Calu3 (cell line): ENCODE measurements at regions of chr2 and their contacts with region 1.

Region 1: DNA sequence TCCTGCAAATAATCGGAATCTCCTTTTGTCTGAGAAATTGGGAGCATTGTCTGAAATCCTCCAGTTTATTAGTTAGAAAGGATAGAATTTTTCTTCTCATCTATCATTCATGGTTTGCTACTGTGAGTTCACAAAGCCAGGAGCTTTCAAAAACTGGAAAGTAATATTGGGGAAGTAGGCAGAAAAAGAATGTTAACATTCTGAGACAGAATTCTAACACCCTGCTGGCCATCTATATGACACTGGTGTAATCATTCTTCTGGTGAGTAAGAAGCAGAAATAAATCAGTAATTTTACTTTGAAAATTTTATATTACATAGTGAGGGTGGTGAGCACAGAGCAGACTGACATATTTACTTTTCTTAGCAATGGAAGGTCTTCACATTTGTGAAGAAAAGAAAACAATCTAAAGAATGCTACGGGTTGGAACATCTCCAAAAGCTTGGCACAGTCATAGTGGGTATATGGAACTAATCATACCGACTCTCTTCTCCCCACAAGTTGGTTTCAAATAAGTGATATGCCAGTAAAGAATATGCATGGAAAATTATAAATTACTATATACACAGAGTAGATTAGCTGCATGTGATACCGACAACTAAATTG is 344.9 kb downstream of the LPIN1 start:
- DNase-seq: no peak
- H3K4me3 Mint-ChIP-seq: no peak overlapping the region
- H3K27ac Mint-ChIP-seq: no peak overlapping the region
- H3K4me1 Mint-ChIP-seq: no peaks in the 10 kb centered on the region
- H3K27me3 Mint-ChIP-seq: peaks cover 11% of the 10 kb centered on the region
- CTCF ChIP-seq: no peak

Region 2: DNA sequence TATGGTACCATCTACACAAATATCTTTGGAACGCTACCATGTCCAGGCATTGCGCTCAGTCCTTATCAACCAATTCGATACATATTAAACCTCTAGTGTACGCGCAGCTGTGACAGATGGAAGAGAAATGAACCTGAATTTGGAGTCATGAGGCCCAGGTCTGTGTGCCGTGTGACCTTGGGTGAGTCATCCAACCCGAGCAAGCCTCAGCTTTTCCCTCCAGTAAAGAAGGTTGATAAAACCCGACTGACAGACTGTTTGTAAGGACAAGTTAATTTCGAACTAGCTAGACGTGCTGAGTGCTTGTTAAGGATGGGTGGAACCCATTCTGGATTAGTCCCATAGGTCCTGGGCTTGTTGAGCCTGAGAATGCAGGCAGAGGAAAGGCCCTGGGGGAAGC is 529.3 kb before region 1 on chr2:
- CTCF ChIA-PET with region 1: no interaction called
- intact Hi-C with region 1: loop called (anchors 10 kb)
- DNase-seq: peak; percentile 24
- H3K4me3 Mint-ChIP-seq: no peak overlapping the region
- H3K27ac Mint-ChIP-seq: no peak overlapping the region
- H3K4me1 Mint-ChIP-seq: peaks cover 8% of the 10 kb centered on the region
- H3K27me3 Mint-ChIP-seq: peaks cover 35% of the 10 kb centered on the region
- CTCF ChIP-seq: no peak

Region 3: GRCh38 chr2:11980809-11981208 is 110.5 kb before region 1 on chr2:
- CTCF ChIA-PET with region 1: no interaction called
- intact Hi-C with region 1: no loop called
- DNase-seq: no peak
- H3K4me3 Mint-ChIP-seq: no peak overlapping the region
- H3K27ac Mint-ChIP-seq: no peak overlapping the region
- H3K4me1 Mint-ChIP-seq: no peaks in the 10 kb centered on the region
- H3K27me3 Mint-ChIP-seq: peaks cover 16% of the 10 kb centered on the region
- CTCF ChIP-seq: no peak